HEK293 (cell line): ENCODE measurements at regions of chr6 and their contacts with region 1.

Region 1: DNA sequence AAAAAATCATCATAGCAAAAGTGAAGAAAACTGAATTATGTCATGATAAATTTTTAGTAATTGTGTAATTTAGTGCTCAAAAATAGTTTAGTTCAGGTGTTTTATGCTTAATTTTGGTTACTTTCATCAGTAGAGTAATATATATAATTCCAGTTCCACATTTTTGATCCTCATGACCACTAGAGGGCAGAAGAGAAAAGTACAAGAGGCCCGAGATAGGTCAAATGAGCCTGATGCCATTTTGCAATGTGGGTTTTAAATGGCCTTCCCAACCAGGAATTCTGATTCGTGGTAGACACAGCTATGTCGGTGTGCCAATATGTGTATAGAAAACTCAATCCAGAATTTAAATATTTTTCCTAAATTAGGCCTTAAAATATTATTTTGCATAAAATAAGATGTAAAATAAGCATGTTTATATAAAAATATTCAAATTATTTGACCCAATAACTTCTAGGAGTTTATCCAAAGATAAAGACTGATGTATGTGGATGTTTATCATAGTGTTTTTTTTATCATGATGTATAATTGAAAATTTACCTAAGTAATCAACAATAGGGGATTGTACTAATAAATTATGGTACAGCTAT is 159.7 kb upstream of the RPS6KA2 start:
- H3K4me3 ChIP-seq: no peak overlapping the region
- H3K27ac ChIP-seq: no peak overlapping the region
- H3K4me1 ChIP-seq: no peaks in the 10 kb centered on the region
- CTCF ChIP-seq: no peak

Region 2: GRCh38 chr6:166814390-166814789 is 27.6 kb after region 1 on chr6:
- CTCF ChIA-PET with region 1: no interaction called
- POLR2A ChIA-PET with region 1: no interaction called
- H3K4me3 ChIP-seq: no peak overlapping the region
- H3K27ac ChIP-seq: no peak overlapping the region
- H3K4me1 ChIP-seq: no peaks in the 10 kb centered on the region
- CTCF ChIP-seq: no peak

Region 3: DNA sequence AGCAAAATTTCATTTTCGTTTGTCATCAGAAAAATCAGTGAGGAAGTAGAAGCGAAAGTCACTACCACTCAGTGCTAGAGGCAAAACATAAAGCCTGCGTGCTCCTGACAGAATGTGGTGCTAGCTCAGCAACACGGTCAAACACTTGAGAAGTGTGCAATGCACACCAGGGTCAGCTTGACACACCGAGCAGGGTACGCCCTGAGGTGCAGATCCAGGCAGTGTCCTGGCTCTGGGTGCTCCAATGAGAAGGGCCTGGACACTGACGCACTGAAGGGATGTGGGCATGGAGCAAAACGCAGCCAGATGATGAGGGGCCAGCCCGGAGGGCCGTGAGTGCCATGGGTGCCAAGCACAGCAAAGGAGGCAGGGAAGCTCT is 163.6 kb after region 1 on chr6:
- CTCF ChIA-PET with region 1: interaction called, 14 read pairs
- POLR2A ChIA-PET with region 1: interaction called, 3 read pairs
- H3K4me3 ChIP-seq: no peak overlapping the region
- H3K27ac ChIP-seq: no peak overlapping the region
- H3K4me1 ChIP-seq: no peaks in the 10 kb centered on the region
- CTCF ChIP-seq: no peak

Region 4: GRCh38 chr6:166989427-166990032 is 202.7 kb after region 1 on chr6:
- CTCF ChIA-PET with region 1: interaction called, 13 read pairs
- POLR2A ChIA-PET with region 1: no interaction called
- H3K4me3 ChIP-seq: no peak overlapping the region
- H3K27ac ChIP-seq: no peak overlapping the region
- H3K4me1 ChIP-seq: no peaks in the 10 kb centered on the region
- CTCF ChIP-seq: 0 out of 2 replicates have a peak, but pooled peaks have one; percentile 20

Region 5: GRCh38 chr6:167141667-167142432 is 355.1 kb after region 1 on chr6:
- CTCF ChIA-PET with region 1: interaction called, 13 read pairs
- POLR2A ChIA-PET with region 1: no interaction called
- H3K4me3 ChIP-seq: no peak overlapping the region
- H3K27ac ChIP-seq: no peak overlapping the region
- H3K4me1 ChIP-seq: no peaks in the 10 kb centered on the region
- CTCF ChIP-seq: peak; percentile 72